Spleen (tissue), 13 donors: ENCODE measurements at regions of chr15 and their contacts with region 1.

Region 1: DNA sequence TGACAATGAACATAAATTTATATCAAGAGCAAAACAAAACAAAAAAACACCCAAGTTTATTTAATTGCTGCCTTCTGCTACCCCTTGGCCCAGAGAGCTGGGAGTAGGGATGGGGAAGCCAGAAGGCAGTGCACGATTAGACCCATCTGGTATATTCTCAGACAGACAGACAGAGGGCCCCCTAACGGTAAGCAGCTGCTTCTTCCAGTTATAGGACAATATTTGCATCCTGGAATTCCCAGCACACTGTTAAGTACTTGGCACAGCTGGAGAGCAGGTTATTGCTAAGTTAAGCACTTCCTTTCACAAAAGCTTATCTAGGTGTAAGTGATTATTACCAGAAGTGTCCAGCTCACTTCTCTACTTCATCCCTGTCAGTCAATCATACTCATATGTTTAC is 39.3 kb downstream of the C2CD4B start:
- DNase-seq: no peak
- H3K4me3 ChIP-seq: no peak overlapping the region
- H3K27ac ChIP-seq: no peak overlapping the region
- H3K4me1 ChIP-seq: peaks cover 4 to 30% (median 19%) of the 10 kb centered on the region in 6 donors
- H3K27me3 ChIP-seq: peaks cover 0 to 4% (median 0%) of the 10 kb centered on the region in 7 donors
- CTCF ChIP-seq: peak in 6 of 11 experiments; percentile 18 to 42 (median 32)
- POLR2A ChIP-seq: no peak

Region 2: DNA sequence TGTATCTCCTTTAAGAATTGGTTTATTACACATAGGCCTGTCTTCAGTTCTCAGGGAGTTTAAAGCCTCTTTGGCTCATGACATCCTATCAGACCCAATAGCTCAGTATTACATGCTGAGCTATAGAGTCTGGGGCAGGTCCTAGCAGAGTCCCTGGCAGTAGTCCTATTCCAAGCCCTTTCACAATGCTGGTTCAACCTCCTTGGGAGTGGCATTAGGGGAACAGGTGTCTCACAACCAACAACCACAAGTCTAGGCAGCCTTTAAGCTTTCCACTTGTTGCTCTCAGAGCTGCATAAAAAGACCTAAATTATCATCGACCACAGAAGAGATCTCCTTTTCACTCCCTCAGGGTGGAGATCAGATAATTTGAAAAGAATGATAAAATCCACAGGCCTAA is 62.1 kb after region 1 on chr15:
- intact Hi-C with region 1: loop called (anchors 10 kb)
- DNase-seq: no peak
- H3K4me3 ChIP-seq: no peak overlapping the region
- H3K27ac ChIP-seq: no peak overlapping the region
- H3K4me1 ChIP-seq: no peaks in the 10 kb centered on the region
- H3K27me3 ChIP-seq: peaks cover 0 to 15% (median 3%) of the 10 kb centered on the region in 7 donors
- CTCF ChIP-seq: no peak
- POLR2A ChIP-seq: no peak